ENCODE measurements at regions of chr4 and their contacts with region 1.

Region 1: GRCh38 chr4:15702941-15703403 is at the start of gene BST1:
- DNase-seq: no peak
- ATAC-seq: peak; percentile 86
- H3K4me3 ChIP-seq: peak within 1 kb of the TSS; percentile 48 to 63
- H3K27ac ChIP-seq: no peak within 1 kb of the TSS
- H3K4me1 ChIP-seq: peaks cover 3% of the 10 kb centered on the region; the same call in 1 of the 2 replicates
- H3K27me3 ChIP-seq: no peaks in the 10 kb centered on the region
- CTCF ChIP-seq: no peak
- total RNA-seq, gene BST1: 3.0 TPM

Region 2: GRCh38 chr4:15100994-15101695 is 601.8 kb before region 1 on chr4:
- CTCF ChIA-PET with region 1: no interaction called
- POLR2A ChIA-PET with region 1: no interaction called
- in situ Hi-C with region 1: no loop called
- intact Hi-C with region 1: no loop called
- DNase-seq: no peak
- ATAC-seq: no peak
- H3K4me3 ChIP-seq: no peak overlapping the region
- H3K27ac ChIP-seq: no peak overlapping the region
- H3K4me1 ChIP-seq: no peaks in the 10 kb centered on the region
- H3K27me3 ChIP-seq: no peaks in the 10 kb centered on the region
- CTCF ChIP-seq: no peak

Region 3: GRCh38 chr4:15605537-15605936 is 97.4 kb before region 1 on chr4:
- CTCF ChIA-PET with region 1: no interaction called
- POLR2A ChIA-PET with region 1: no interaction called
- in situ Hi-C with region 1: no loop called
- intact Hi-C with region 1: no loop called
- DNase-seq: no peak
- ATAC-seq: no peak
- H3K4me3 ChIP-seq: no peak overlapping the region
- H3K27ac ChIP-seq: no peak overlapping the region
- H3K4me1 ChIP-seq: no peaks in the 10 kb centered on the region
- H3K27me3 ChIP-seq: no peaks in the 10 kb centered on the region
- CTCF ChIP-seq: no peak

Region 4: DNA sequence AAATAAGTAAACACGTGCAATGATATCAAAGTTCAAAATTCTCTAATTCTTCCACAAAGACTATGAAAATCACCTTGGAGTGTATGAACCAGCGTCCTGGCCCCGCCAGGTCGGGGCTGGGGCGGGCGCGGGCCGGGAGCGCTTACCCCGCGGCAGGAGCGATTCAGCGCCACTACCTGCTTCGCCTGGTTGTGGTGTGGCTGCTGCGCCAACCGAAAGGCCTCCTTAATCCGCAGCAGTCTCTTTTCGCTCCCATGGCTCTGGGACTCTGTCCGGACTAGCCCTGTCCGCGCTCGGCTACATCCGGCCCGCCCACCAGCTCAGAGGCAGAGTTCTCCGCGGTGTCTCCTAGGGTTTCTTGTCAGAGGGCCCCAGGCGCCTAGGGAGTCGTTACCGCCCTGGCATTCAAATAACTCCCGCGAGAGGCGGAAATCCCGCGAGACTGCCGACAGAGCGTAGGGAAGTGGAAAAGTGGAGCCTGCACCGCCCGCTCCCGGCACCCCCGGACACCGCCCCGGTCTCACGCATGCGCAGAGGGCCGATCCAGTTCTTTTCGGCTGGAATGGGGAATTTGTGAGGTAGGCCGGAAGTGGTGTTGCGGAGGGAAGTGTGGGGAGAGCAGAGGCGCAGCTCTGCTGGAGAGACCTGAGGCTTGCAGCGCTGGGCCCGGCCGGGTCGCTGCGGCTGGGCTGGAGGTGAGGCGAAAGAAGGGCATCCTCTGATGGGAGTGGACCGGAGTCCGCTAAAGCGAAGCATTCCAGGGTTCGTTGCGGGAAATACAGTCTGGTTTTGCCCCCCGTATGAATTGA is 21.6 kb before region 1 on chr4 and contains the start of gene FAM200B:
- CTCF ChIA-PET with region 1: no interaction called
- POLR2A ChIA-PET with region 1: interaction called, 10 read pairs
- in situ Hi-C with region 1: no loop called
- intact Hi-C with region 1: no loop called
- DNase-seq: peak; percentile 91
- ATAC-seq: peak; percentile 96
- H3K4me3 ChIP-seq: peak within 1 kb of the TSS; percentile 93 to 94
- H3K27ac ChIP-seq: peak within 1 kb of the TSS; percentile 99
- H3K4me1 ChIP-seq: peaks cover 13% of the 10 kb centered on the region; the same call in 1 of the 2 replicates
- H3K27me3 ChIP-seq: no peaks in the 10 kb centered on the region
- CTCF ChIP-seq: no peak
- total RNA-seq, gene FAM200B: 15.2 TPM

Region 5: GRCh38 chr4:15714646-15715435 is 11.9 kb after region 1 on chr4:
- CTCF ChIA-PET with region 1: no interaction called
- POLR2A ChIA-PET with region 1: interaction called, 14 read pairs
- in situ Hi-C with region 1: no loop called
- intact Hi-C with region 1: no loop called
- DNase-seq: no peak
- ATAC-seq: no peak
- H3K4me3 ChIP-seq: no peak overlapping the region
- H3K27ac ChIP-seq: no peak overlapping the region
- H3K4me1 ChIP-seq: no peaks in the 10 kb centered on the region
- H3K27me3 ChIP-seq: no peaks in the 10 kb centered on the region
- CTCF ChIP-seq: no peak